CD8-positive, alpha-beta T cell (primary cell): ENCODE measurements at regions of chr11 and their contacts with region 1.

Region 1: GRCh38 chr11:57530596-57531507 is at the start of gene TIMM10:
- DNase-seq: peak; percentile 86 to 98 (median 92)
- ATAC-seq: peak; percentile 92
- H3K4me3 ChIP-seq: peak within 1 kb of the TSS; percentile 70 to 74
- H3K4me3 Mint-ChIP-seq: peak within 1 kb of the TSS; percentile 88
- H3K27ac ChIP-seq: peak within 1 kb of the TSS; percentile 77 to 87
- H3K27ac Mint-ChIP-seq: peak within 1 kb of the TSS; percentile 94
- H3K4me1 ChIP-seq: peaks cover 19% of the 10 kb centered on the region
- H3K4me1 Mint-ChIP-seq: peaks cover 39% of the 10 kb centered on the region
- H3K27me3 ChIP-seq: no peaks in the 10 kb centered on the region
- H3K27me3 Mint-ChIP-seq: no peaks in the 10 kb centered on the region
- CTCF ChIP-seq: no peak
- total RNA-seq, gene TIMM10: 16.4 to 18.9 TPM

Region 2: GRCh38 chr11:57324886-57325734 is 205.7 kb before region 1 on chr11 and contains the start of gene TNKS1BP1:
- CTCF ChIA-PET with region 1: interaction called, 4 read pairs
- POLR2A ChIA-PET with region 1: no interaction called
- intact Hi-C with region 1: loop called in 1 of 2 experiments (anchors 1 kb)
- DNase-seq: peak; percentile 74 to 93 (median 88)
- ATAC-seq: peak; percentile 88
- H3K4me3 ChIP-seq: peak within 1 kb of the TSS; percentile 75 to 98
- H3K4me3 Mint-ChIP-seq: peak within 1 kb of the TSS; percentile 87
- H3K27ac ChIP-seq: peak within 1 kb of the TSS; percentile 80 to 81
- H3K27ac Mint-ChIP-seq: peak within 1 kb of the TSS; percentile 96
- H3K4me1 ChIP-seq: peaks cover 29% of the 10 kb centered on the region
- H3K4me1 Mint-ChIP-seq: peaks cover 34% of the 10 kb centered on the region
- H3K27me3 ChIP-seq: no peaks in the 10 kb centered on the region
- H3K27me3 Mint-ChIP-seq: no peaks in the 10 kb centered on the region
- CTCF ChIP-seq: no peak
- total RNA-seq, gene TNKS1BP1: 13.5 to 14.0 TPM

Region 3: DNA sequence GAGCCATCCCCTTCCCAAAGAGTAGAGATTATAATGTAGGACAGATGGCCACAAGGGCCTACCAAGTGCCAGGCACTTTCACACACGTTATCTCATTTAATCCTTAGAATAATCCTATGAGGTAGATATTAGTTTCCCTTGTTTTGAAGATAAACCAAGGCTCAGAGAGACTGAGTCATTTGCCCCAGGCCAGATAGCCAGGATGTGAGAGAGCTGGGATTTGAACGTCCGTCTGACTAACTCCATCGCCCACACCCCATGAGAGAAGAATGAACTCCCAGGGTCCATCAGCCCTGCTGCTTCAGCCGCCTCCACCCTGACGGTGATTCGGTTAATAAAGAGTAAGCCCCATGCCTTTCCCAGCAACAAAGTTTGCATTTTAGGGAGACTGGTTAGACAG is 160.6 kb before region 1 on chr11:
- CTCF ChIA-PET with region 1: no interaction called
- POLR2A ChIA-PET with region 1: no interaction called
- intact Hi-C with region 1: no loop called
- DNase-seq: no peak
- ATAC-seq: no peak
- H3K4me3 ChIP-seq: no peak overlapping the region
- H3K4me3 Mint-ChIP-seq: no peak overlapping the region
- H3K27ac ChIP-seq: no peak overlapping the region
- H3K27ac Mint-ChIP-seq: no peak overlapping the region
- H3K4me1 ChIP-seq: no peaks in the 10 kb centered on the region
- H3K4me1 Mint-ChIP-seq: no peaks in the 10 kb centered on the region
- H3K27me3 ChIP-seq: no peaks in the 10 kb centered on the region
- H3K27me3 Mint-ChIP-seq: peaks cover 2% of the 10 kb centered on the region
- CTCF ChIP-seq: no peak

Region 4: DNA sequence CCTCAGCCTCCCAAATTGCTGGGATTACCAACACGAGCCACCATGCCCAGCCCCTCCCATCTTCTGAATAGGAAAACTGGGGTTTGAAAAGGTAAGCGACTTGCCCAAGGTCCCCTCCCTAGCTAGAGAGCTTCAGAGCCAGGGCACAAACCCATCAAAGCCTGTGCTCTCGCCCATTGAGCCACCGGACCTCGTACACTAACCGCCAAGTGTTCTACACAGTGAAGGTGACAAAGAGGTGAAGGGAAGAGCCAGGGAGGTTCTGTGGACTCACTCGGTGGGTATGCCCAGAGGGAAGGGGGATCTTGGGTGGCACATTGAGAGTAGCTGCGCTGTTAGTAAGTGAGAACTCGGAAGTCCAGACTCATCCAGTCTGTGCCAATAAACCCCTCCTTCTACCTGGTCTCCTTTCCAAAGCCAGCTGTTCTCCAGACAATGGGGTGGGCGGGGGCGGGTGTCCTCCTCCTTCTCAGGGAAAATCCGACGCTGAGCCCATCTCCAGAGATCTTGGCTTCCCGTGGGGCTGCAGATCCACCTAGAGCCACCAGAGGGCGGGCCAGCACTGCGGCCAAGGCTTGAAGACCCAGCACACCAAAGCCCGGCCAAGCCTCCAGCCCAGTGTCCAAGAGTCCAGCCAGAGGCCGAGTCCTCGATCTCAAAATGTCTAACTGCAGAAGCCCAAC is 73.8 kb before region 1 on chr11:
- CTCF ChIA-PET with region 1: interaction called, 190 read pairs
- POLR2A ChIA-PET with region 1: no interaction called
- intact Hi-C with region 1: loop called (anchors 1 kb)
- DNase-seq: peak in 8 of 9 experiments; percentile 55 to 83 (median 78)
- ATAC-seq: peak; percentile 60
- H3K4me3 ChIP-seq: no peak overlapping the region
- H3K4me3 Mint-ChIP-seq: peak overlapping the region; percentile 73
- H3K27ac ChIP-seq: no peak overlapping the region
- H3K27ac Mint-ChIP-seq: no peak overlapping the region
- H3K4me1 ChIP-seq: peaks cover 37% of the 10 kb centered on the region
- H3K4me1 Mint-ChIP-seq: peaks cover 27% of the 10 kb centered on the region
- H3K27me3 ChIP-seq: peaks cover 14 to 35% of the 10 kb centered on the region in 2 experiments
- H3K27me3 Mint-ChIP-seq: peaks cover 25% of the 10 kb centered on the region
- CTCF ChIP-seq: peak; percentile 99

Region 5: GRCh38 chr11:57499413-57499982 is 31.4 kb before region 1 on chr11:
- CTCF ChIA-PET with region 1: interaction called, 755 read pairs
- POLR2A ChIA-PET with region 1: interaction called, 18 read pairs
- intact Hi-C with region 1: no loop called
- DNase-seq: peak in 3 of 9 experiments; percentile 20 to 37 (median 25)
- ATAC-seq: no peak
- H3K4me3 ChIP-seq: no peak overlapping the region
- H3K4me3 Mint-ChIP-seq: no peak overlapping the region
- H3K27ac ChIP-seq: no peak overlapping the region
- H3K27ac Mint-ChIP-seq: no peak overlapping the region
- H3K4me1 ChIP-seq: no peaks in the 10 kb centered on the region
- H3K4me1 Mint-ChIP-seq: peaks cover 5% of the 10 kb centered on the region
- H3K27me3 ChIP-seq: no peaks in the 10 kb centered on the region
- H3K27me3 Mint-ChIP-seq: no peaks in the 10 kb centered on the region
- CTCF ChIP-seq: no peak

Region 6: GRCh38 chr11:57619331-57619730 is 88.5 kb after region 1 on chr11:
- CTCF ChIA-PET with region 1: no interaction called
- POLR2A ChIA-PET with region 1: no interaction called
- intact Hi-C with region 1: no loop called
- DNase-seq: no peak
- ATAC-seq: no peak
- H3K4me3 ChIP-seq: no peak overlapping the region
- H3K4me3 Mint-ChIP-seq: no peak overlapping the region
- H3K27ac ChIP-seq: no peak overlapping the region
- H3K27ac Mint-ChIP-seq: no peak overlapping the region
- H3K4me1 ChIP-seq: no peaks in the 10 kb centered on the region
- H3K4me1 Mint-ChIP-seq: no peaks in the 10 kb centered on the region
- H3K27me3 ChIP-seq: no peaks in the 10 kb centered on the region
- H3K27me3 Mint-ChIP-seq: peaks cover 9% of the 10 kb centered on the region
- CTCF ChIP-seq: no peak

Region 7: DNA sequence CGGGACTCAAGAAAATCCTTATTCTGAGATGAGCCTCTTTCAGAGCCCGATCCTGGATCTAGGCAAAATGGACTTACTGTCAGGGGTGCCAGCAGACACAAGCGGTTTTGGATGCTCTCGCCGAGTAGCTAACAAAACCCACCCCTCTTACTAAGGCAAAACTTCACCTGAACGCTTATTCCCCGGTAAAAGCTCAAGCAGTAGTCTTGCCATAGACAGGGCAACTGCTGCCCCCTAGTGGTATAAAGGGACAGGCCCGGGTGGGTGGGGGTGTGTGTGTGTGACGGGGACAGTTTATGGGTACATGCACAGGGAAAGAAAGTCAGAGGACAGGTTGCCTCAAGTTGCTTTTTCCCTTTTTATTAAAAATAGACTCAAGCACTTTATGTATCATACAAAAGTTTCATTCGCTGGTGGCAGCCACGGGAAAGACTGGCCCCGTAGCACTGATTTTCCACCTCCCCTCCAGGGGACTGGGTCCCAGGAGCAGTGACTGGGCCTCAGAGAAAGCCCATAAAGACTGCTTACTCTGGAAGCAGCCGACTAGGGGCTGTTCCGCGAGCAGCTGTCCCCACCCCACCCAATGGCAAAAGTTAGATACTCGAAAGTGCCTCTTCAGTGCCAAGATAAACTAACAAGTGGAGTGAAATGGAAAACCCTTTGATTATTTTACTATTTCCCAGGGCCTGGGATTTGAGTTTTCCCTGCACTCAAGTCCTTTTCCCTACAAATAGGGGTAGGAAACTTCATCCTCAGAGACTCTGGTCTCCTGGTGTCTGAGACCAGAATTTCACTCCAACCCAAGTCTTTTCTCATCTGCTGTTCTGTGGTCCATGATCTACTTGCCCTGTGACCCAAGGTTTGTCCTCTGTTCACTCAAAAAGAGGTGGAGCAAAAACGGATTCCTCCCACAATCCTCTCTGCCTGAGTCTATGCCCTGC is 114.2 kb after region 1 on chr11:
- CTCF ChIA-PET with region 1: interaction called, 21 read pairs
- POLR2A ChIA-PET with region 1: interaction called, 3 read pairs
- intact Hi-C with region 1: loop called in 1 of 2 experiments (anchors 2 kb)
- DNase-seq: peak; percentile 74 to 93 (median 85)
- ATAC-seq: peak; percentile 61
- H3K4me3 ChIP-seq: no peak overlapping the region
- H3K4me3 Mint-ChIP-seq: no peak overlapping the region
- H3K27ac ChIP-seq: no peak overlapping the region
- H3K27ac Mint-ChIP-seq: no peak overlapping the region
- H3K4me1 ChIP-seq: peaks cover 15% of the 10 kb centered on the region
- H3K4me1 Mint-ChIP-seq: peaks cover 34% of the 10 kb centered on the region
- H3K27me3 ChIP-seq: peaks cover 0 to 22% of the 10 kb centered on the region in 2 experiments
- H3K27me3 Mint-ChIP-seq: peaks cover 48% of the 10 kb centered on the region
- CTCF ChIP-seq: peak; percentile 78

Region 8: GRCh38 chr11:57712256-57713150 is 181.7 kb after region 1 on chr11 and contains the start of gene TMX2:
- CTCF ChIA-PET with region 1: interaction called, 7 read pairs
- POLR2A ChIA-PET with region 1: interaction called, 5 read pairs
- intact Hi-C with region 1: loop called (anchors 1 kb)
- DNase-seq: peak; percentile 78 to 97 (median 88)
- ATAC-seq: peak; percentile 87
- H3K4me3 ChIP-seq: peak within 1 kb of the TSS; percentile 98 to 100
- H3K4me3 Mint-ChIP-seq: peak within 1 kb of the TSS; percentile 98
- H3K27ac ChIP-seq: peak within 1 kb of the TSS; percentile 91 to 93
- H3K27ac Mint-ChIP-seq: peak within 1 kb of the TSS; percentile 97
- H3K4me1 ChIP-seq: peaks cover 33% of the 10 kb centered on the region
- H3K4me1 Mint-ChIP-seq: peaks cover 52% of the 10 kb centered on the region
- H3K27me3 ChIP-seq: no peaks in the 10 kb centered on the region
- H3K27me3 Mint-ChIP-seq: no peaks in the 10 kb centered on the region
- CTCF ChIP-seq: no peak
- total RNA-seq, gene TMX2: 38.5 to 42.1 TPM